ENCODE measurements at regions of chr15 and their contacts with region 1.

Region 1: DNA sequence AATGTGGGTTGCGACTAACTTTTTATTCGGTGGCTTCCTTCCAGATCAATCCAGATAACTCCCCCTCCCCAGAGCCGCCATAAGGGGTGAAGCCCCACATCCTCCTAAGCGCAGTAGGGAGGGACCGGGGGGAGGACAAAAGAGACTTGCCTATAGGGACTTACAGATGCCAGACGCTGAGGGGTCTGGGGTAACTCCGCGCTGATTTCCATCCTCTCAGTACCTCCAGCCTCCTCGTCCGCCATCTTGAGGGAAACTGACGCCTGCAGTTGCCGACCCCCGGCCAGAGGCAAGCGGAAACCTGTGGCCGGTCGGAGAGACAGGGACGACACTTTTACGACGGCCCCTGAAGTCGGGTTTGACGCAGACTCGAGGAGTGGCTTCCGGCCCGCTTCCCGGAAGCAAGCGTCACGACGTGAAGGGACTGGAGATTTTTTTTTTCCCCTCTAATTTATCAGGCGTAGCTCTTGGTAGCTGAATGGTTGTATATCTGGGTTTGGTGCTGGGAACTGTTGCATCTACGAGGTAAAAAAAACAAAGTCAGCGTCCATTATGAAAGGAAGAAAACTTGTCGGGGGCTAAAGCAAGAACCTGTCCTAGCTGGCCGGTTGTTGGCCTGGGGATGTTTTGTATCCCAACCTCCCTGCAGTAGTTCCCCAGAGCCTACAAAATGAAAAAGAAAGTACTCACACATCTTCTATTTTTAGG is at the start of gene UBR1:
- DNase-seq: peak; percentile 69
- ATAC-seq: peak; percentile 92
- H3K4me3 ChIP-seq: peak within 1 kb of the TSS; percentile 78
- H3K27ac ChIP-seq: peak within 1 kb of the TSS; percentile 82
- H3K4me1 ChIP-seq: no peaks in the 10 kb centered on the region; the same call in 1 of the 2 replicates
- H3K27me3 ChIP-seq: no peaks in the 10 kb centered on the region
- CTCF ChIP-seq: no peak
- EP300 ChIP-seq: no peak
- POLR2A ChIP-seq: peak; percentile 84
- RAD21 ChIP-seq: no peak
- polyA plus RNA-seq, gene UBR1: 4.5 to 5.5 TPM

Region 2: GRCh38 chr15:43118829-43119228 is 12.9 kb after region 1 on chr15:
- CTCF ChIA-PET with region 1: interaction called, 5 read pairs
- POLR2A ChIA-PET with region 1: interaction called, 5 read pairs
- RAD21 ChIA-PET with region 1: interaction called, 4 read pairs
- SMC1A ChIA-PET with region 1: interaction called, 13 read pairs
- in situ Hi-C with region 1: no loop called
- intact Hi-C with region 1: no loop called
- DNase-seq: no peak
- ATAC-seq: peak; percentile 67
- H3K4me3 ChIP-seq: no peak overlapping the region
- H3K27ac ChIP-seq: no peak overlapping the region
- H3K4me1 ChIP-seq: peaks cover 7% of the 10 kb centered on the region
- H3K27me3 ChIP-seq: no peaks in the 10 kb centered on the region
- CTCF ChIP-seq: no peak
- EP300 ChIP-seq: no peak
- POLR2A ChIP-seq: no peak
- RAD21 ChIP-seq: no peak

Measured in GM12878 (cell line).